ENCODE measurements at regions of chr2 and their contacts with region 1.

Region 1: GRCh38 chr2:38462109-38462759 is 85.2 kb upstream of the ATL2 start:
- DNase-seq: no peak
- H3K4me3 Mint-ChIP-seq: no peak overlapping the region
- H3K27ac Mint-ChIP-seq: peak overlapping the region; percentile 9
- H3K4me1 Mint-ChIP-seq: peaks cover 9% of the 10 kb centered on the region
- H3K27me3 Mint-ChIP-seq: peaks cover 23% of the 10 kb centered on the region

Region 2: DNA sequence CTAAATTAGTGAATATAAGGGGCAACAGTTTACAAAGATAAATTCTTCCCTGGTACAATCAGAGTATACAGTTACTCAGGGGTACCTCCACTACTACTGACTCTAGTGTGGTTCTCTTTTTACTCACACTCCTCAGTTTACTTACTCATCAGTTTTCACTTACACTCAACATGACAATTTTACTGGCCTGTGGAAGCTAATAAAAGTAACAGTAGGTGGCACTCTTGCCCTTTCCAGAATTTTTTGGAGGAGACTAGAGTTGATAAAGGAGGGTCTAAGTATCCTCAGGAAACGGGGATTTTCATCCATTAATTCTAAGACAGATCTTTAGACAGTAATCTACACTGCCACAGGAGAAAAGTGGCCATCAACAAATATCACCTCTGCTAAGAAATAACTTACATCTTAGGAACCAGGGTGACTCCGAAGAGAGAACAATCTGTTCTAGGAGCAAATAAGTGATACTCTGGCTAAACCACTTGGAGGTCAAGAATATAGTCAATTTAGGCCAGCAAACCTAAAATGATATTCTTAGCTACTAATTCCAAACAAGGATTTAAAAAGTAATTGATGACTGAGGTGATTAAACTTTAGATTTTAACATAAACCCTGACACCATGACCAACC is 146.4 kb before region 1 on chr2:
- intact Hi-C with region 1: loop called (anchors 1 kb)
- DNase-seq: no peak
- H3K4me3 Mint-ChIP-seq: no peak overlapping the region
- H3K27ac Mint-ChIP-seq: no peak overlapping the region
- H3K4me1 Mint-ChIP-seq: peaks cover 21% of the 10 kb centered on the region
- H3K27me3 Mint-ChIP-seq: no peaks in the 10 kb centered on the region

Region 3: GRCh38 chr2:38394903-38395341 is 67.3 kb before region 1 on chr2:
- intact Hi-C with region 1: loop called (anchors 5 kb)
- DNase-seq: no peak
- H3K4me3 Mint-ChIP-seq: no peak overlapping the region
- H3K27ac Mint-ChIP-seq: peak overlapping the region; percentile 23
- H3K4me1 Mint-ChIP-seq: peaks cover 20% of the 10 kb centered on the region
- H3K27me3 Mint-ChIP-seq: peaks cover 18% of the 10 kb centered on the region

Region 4: GRCh38 chr2:38474715-38475566 is 12.7 kb after region 1 on chr2:
- intact Hi-C with region 1: loop called (anchors 1 kb)
- DNase-seq: no peak
- H3K4me3 Mint-ChIP-seq: no peak overlapping the region
- H3K27ac Mint-ChIP-seq: peak overlapping the region; percentile 18
- H3K4me1 Mint-ChIP-seq: peaks cover 28% of the 10 kb centered on the region
- H3K27me3 Mint-ChIP-seq: peaks cover 22% of the 10 kb centered on the region